Cardiac septum (tissue), 1 donor: ENCODE measurements at regions of chr9 and their contacts with region 1.

Region 1: GRCh38 chr9:6353851-6354686 is 25.9 kb downstream of the TPD52L3 start:
- DNase-seq: no peak

Region 2: DNA sequence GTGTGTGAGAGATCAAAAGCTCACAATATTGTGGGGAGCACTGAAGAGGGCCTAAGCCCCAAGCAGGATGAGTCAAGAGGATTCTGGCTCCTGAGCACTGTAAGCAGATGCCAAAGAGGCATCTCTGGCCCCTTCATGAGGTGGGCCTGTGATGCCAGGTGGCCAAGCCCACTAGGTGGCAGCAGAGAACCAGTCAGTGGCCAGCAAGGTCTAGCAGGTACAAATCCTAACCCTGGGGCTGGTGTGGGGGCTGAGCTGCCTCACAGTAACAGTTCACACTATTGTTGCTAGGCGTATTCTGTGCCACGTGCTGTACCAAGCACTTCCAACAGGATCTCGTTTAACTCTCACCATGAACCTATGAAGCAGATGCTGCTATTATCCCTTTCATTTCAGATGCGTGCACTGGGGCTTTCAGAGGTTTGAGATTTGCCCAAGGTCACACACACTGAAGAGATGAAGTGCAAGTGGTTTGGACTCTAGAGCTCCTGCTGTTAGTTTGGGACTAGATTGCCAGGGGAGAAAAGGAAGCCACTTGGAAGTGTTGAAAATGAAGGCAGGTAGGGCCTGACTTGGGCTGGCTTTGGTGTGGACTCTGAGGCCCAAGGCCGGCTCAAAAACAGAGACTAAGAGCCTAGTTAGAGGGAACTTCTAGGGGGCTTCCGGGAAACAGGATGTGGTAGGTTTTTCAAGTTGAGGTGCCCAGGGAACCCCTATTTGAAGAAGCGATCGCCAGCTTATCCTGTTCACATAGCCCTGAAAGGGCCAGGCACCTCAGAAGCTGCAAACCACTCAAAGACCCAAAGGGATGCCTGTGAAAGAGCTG is 467.7 kb before region 1 on chr9:
- intact Hi-C with region 1: no loop called
- DNase-seq: no peak

Region 3: DNA sequence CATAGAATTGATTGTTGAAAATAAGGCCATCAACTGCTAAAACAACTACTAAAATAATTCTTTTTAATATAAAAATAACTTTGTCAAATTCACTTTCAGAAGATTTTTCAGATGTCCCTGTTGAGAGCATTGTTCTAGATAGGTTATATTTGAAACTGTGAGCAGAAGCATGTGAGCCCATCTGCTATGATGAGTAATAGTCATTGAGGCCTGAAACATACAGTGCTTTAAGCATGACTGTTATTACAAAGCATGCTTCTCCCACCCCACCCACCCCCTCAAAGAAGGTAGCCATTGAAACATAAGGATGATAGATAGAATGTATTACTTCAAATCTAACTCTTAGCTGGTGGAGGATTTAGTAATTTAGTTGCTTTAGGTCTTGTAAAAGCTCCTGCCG is 144.9 kb after region 1 on chr9:
- intact Hi-C with region 1: loop called (anchors 10 kb)
- DNase-seq: no peak

Region 4: DNA sequence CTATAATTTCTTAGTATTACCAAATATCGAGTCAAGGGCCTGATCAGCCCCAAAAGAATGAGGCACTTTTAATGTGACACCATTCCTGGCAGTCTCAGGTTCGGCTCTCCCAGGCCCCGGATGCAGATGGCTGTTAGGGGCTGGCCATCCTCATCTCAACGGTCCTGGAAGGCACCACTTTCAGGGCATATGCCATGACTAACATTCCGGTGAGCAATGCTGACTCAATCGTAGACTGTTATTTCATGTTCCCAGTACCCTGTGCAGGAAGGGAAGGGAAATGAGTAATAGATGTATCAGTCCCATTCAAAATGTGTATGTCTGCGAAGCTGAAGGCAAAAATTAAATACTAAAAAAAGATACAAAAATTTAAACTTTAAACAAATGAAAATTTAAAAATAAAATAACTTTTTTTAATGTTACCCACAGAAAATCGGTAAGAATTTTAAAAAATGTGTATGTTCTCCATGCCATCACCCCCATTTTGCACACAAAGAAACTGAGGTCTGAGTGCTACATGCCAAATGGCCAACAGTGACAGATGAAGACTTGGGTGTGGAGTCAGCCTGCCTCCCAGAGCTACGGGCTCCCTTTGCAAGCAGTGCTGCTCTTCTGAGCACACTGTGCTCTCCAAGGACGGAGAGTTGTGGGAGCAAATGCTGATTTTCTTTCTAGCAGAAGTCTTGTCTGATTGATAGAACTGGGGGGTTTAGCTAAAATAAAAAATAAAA is 212.5 kb after region 1 on chr9:
- intact Hi-C with region 1: loop called (anchors 2 kb)
- DNase-seq: no peak

Region 5: DNA sequence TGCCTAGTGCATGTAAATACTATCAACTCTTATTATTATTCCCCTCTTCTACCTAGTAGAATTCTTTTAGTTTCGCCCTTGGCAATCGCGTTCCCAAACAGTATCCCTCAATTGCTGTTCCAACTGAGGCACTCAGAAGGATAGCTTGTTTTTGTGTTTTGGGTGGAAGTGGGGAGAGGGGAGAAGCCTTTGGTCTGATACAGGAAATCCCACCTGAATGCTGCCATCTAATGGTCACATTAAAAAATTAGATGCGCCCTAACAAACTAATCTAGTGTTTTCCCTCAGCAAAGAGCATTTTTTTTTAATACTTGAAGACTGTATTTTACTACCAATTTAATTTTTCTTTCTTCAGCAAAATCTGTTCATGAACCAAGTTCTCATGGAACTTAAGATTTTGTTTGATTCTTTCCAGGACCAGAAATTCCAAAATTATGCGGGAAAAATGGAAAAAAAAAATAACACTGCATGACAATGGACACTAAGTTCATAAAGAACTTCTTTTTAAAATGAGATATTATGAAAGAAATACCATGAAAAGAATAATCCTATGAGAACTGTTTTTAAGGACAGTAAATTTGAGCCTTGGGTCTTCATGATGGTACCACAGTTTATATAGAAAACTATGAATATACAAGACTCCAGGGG is 313.7 kb after region 1 on chr9:
- intact Hi-C with region 1: loop called (anchors 10 kb)
- DNase-seq: no peak